Transverse colon (tissue), 4 donors: ENCODE measurements at regions of chr2 and their contacts with region 1.

Region 1: GRCh38 chr2:11784747-11785610 is 38.5 kb downstream of the LPIN1 start:
- DNase-seq: peak; percentile 26
- H3K4me3 ChIP-seq: peak overlapping the region in 1 of 4 donors; percentile 33
- H3K27ac ChIP-seq: no peak overlapping the region
- H3K4me1 ChIP-seq: no peaks in the 10 kb centered on the region
- H3K27me3 ChIP-seq: no peaks in the 10 kb centered on the region
- CTCF ChIP-seq: peak; percentile 83 to 96 (median 94)
- EP300 ChIP-seq: no peak
- POLR2A ChIP-seq: no peak

Region 2: DNA sequence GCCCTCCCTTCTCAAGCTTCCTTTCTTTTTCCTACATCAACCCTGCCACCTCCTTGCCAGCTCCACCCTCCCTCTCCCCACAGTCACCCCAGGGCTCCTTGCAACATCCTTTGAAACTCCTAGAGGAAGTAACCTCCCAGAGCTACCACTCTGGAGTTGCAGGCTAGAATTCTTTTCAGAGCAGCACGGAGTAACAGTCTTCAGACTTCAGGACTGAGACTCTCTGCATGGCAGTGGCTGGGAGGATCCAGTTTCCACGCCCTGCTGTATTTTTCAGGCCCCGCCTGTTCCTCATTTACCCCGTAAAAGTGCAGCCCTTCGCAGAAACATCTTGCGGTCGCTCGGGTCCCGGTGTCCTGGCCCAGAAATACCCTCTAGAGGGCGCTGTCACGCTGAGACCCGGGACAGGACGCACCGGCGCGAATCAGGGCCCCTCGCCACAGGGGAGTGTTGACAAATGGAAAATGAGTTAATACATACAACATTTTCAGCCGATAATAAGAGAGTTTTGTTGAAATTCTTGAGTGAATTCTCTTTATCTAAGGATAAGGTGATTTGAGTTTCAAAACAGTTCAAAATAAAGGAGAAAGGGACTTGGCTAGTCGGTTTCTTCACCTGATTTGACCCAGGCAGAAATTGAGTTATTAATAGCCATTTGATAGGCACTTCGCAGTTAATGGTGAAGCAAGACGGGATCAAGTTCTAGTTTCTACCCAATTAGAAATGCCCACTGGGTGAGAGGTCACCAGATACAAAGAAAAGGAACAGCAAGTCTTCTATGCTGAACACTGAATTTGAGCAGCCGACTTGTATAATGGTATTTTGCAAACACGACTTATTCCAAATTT is 96.5 kb before region 1 on chr2:
- in situ Hi-C with region 1: loop called (anchors 5 to 10 kb)
- intact Hi-C with region 1: no loop called
- DNase-seq: peak; percentile 86
- H3K4me3 ChIP-seq: peak overlapping the region in 1 of 4 donors; percentile 1
- H3K27ac ChIP-seq: peak overlapping the region in 3 of 4 donors; percentile 23 to 41 (median 38)
- H3K4me1 ChIP-seq: peaks cover 0 to 22% (median 13%) of the 10 kb centered on the region in 4 donors
- H3K27me3 ChIP-seq: peaks cover 19% of the 10 kb centered on the region
- CTCF ChIP-seq: peak; percentile 75 to 87 (median 81)
- EP300 ChIP-seq: no peak
- POLR2A ChIP-seq: no peak

Region 3: GRCh38 chr2:11726384-11726783 is 58.6 kb before region 1 on chr2:
- in situ Hi-C with region 1: no loop called
- intact Hi-C with region 1: no loop called
- DNase-seq: no peak
- H3K4me3 ChIP-seq: no peak overlapping the region
- H3K27ac ChIP-seq: no peak overlapping the region
- H3K4me1 ChIP-seq: no peaks in the 10 kb centered on the region
- H3K27me3 ChIP-seq: no peaks in the 10 kb centered on the region
- CTCF ChIP-seq: no peak
- EP300 ChIP-seq: no peak
- POLR2A ChIP-seq: no peak

Region 4: GRCh38 chr2:11738589-11739436 is 46.2 kb before region 1 on chr2:
- in situ Hi-C with region 1: loop called in 1 of 4 experiments (anchors 5 kb)
- intact Hi-C with region 1: no loop called
- DNase-seq: peak; percentile 68
- H3K4me3 ChIP-seq: no peak overlapping the region
- H3K27ac ChIP-seq: peak overlapping the region in 2 of 4 donors; percentile 19 to 69
- H3K4me1 ChIP-seq: peaks cover 3 to 13% (median 6%) of the 10 kb centered on the region in 4 donors
- H3K27me3 ChIP-seq: no peaks in the 10 kb centered on the region
- CTCF ChIP-seq: peak; percentile 30 to 53 (median 45)
- EP300 ChIP-seq: no peak
- POLR2A ChIP-seq: no peak

Region 5: DNA sequence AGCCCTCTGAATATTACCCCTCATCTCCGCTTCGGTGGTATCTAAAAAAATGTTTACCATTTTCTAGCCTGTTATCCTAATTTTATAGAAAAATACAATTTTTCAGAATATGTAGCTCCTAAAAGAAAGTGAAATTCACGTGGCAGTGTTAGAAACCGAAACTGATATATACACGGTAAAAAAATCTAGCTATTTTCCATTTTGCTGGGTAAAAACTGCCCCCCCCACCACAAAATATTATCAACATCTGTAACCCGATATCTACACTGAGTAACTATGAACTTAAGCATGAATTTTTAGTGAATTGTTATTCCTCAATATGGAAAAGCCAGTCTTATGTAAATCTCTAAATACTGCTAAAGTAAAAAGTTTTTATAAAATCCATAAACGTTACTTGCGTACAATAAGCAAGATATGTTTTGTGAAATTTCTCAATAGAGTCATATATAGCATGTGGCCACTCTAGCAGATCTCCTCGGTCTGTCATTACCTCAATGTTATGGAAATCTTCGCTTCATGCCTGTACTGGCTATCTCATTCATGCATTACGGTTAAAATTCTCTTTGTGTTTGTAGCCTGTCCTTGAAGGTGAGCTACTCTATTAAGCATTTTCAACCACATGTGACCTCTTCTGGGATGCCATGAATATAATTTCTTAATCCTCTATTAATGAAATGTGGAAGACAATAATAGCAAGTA is 1456.0 kb after region 1 on chr2:
- in situ Hi-C with region 1: no loop called
- intact Hi-C with region 1: no loop called
- DNase-seq: no peak
- H3K4me3 ChIP-seq: no peak overlapping the region
- H3K27ac ChIP-seq: no peak overlapping the region
- H3K4me1 ChIP-seq: no peaks in the 10 kb centered on the region
- H3K27me3 ChIP-seq: no peaks in the 10 kb centered on the region
- CTCF ChIP-seq: no peak
- EP300 ChIP-seq: no peak
- POLR2A ChIP-seq: no peak